Motor neuron (in vitro differentiated cells): ENCODE measurements at regions of chr13 and their contacts with region 1.

Region 1: DNA sequence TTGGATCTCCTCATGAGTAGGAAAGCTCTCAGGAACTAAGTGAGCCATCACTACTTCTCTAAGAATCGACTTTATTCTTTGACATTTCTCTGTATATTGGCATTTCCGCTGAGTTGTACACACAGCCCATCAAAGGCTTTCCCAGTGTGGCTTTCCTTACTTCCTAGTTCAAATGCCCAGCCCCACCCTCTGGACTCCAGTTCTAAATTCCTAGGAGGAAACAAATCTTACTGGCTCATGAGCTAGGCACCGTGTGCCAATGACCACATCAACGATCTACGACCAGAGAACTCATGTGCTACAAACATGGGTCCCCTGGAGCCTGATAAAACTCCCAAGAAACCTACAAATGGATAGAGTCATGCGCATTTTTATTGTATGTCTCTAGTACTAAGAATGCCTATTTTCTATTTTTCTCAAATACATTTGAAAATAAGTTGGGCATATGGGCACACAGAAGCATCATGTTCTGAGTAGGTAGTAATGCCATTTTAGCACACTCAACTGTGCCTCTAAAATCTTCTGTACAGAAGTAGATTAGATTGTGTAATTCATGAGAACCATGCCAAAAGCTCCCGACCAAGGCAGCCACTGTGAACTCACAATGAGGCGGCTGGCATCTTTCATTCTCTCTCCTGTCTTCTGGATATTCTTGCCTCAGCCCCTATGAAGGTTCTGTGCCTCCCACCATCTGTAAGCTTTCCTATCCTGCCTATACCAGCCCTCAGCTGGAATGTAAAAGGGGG is 10.5 kb upstream of the RAP2A start:
- ATAC-seq: no peak
- H3K4me3 ChIP-seq: no peak overlapping the region
- H3K27ac ChIP-seq: no peak overlapping the region
- H3K4me1 ChIP-seq: peaks cover 0 to 4% of the 10 kb centered on the region in 2 donors

Region 2: GRCh38 chr13:97328222-97328790 is 95.2 kb before region 1 on chr13:
- in situ Hi-C with region 1: no loop called
- ATAC-seq: peak in 4 of 8 experiments; percentile 32 to 46 (median 38)
- H3K4me3 ChIP-seq: no peak overlapping the region
- H3K27ac ChIP-seq: peak overlapping the region in 1 of 2 donors; percentile 32
- H3K4me1 ChIP-seq: peaks cover 0 to 4% of the 10 kb centered on the region in 2 donors

Region 3: DNA sequence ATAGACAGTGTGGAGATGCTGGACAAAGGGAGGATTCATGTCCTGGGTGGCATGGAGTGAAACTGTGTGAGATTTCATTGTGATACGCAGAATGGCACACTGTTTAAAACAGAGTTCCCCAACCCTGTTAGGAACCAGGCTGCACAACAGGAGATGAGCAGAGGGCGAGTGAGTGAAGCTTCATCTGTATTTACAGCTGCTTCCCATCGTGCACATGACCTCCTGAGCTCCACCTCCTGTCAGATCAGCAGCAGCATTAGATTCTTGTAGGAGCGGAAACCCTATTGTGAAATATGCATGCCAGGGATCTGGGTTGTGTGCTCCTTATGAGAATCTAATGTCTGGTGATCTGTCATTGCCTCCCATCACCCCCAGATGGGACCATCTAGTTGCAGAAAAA is 83.0 kb after region 1 on chr13:
- in situ Hi-C with region 1: loop called in 1 of 9 experiments (anchors 25 kb)
- ATAC-seq: peak; percentile 45 to 97 (median 83)
- H3K4me3 ChIP-seq: no peak overlapping the region
- H3K27ac ChIP-seq: no peak overlapping the region
- H3K4me1 ChIP-seq: peaks cover 0 to 5% of the 10 kb centered on the region in 2 donors

Region 4: DNA sequence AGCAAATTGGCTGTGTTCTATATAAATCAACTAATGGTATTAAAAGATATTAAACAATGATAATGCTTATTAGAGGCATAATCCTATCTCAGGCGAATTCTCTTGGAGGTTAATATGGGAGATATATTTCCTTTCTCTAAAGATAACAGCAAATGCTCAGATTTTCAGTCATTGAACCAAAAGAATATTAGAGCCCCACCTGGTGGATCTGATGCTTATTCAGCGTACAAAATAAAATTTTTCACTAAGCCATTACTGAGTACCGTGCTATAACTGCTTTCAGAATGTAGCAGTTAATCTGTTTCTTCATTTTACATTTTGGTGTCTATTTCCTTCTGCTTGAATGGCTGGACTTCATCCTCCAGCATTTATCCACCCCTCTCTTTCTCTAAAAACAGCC is 386.7 kb after region 1 on chr13:
- in situ Hi-C with region 1: loop called in 1 of 9 experiments (anchors 25 kb)
- ATAC-seq: peak in 4 of 8 experiments; percentile 7 to 52 (median 44)
- H3K4me3 ChIP-seq: no peak overlapping the region
- H3K27ac ChIP-seq: no peak overlapping the region
- H3K4me1 ChIP-seq: no peaks in the 10 kb centered on the region